ENCODE measurements at regions of chrX and their contacts with region 1.

Region 1: GRCh38 chrX:77628294-77629025 is 157.6 kb downstream of the ATRX start:
- DNase-seq: no peak

Region 2: GRCh38 chrX:77276742-77277141 is 351.7 kb before region 1 on chrX:
- intact Hi-C with region 1: loop called in 1 of 2 experiments (anchors 10 kb)
- DNase-seq: no peak

Region 3: GRCh38 chrX:77597090-77597489 is 31.4 kb before region 1 on chrX:
- intact Hi-C with region 1: no loop called
- DNase-seq: no peak